Naive thymus-derived CD8-positive, alpha-beta T cell (primary cell): ENCODE measurements at regions of chr19 and their contacts with region 1.

Region 1: GRCh38 chr19:3163230-3163886 is 15.2 kb upstream of the S1PR4 start:
- DNase-seq: peak; percentile 50 to 83 (median 67)
- ATAC-seq: peak; percentile 97 to 99
- H3K4me3 Mint-ChIP-seq: peak overlapping the region in 4 of 10 donors; percentile 24 to 65 (median 55)
- H3K27ac Mint-ChIP-seq: peak overlapping the region in 8 of 10 donors; percentile 3 to 80 (median 64)
- H3K4me1 Mint-ChIP-seq: peaks cover 11 to 40% (median 17%) of the 10 kb centered on the region in 4 donors
- H3K27me3 Mint-ChIP-seq: no peaks in the 10 kb centered on the region

Region 2: DNA sequence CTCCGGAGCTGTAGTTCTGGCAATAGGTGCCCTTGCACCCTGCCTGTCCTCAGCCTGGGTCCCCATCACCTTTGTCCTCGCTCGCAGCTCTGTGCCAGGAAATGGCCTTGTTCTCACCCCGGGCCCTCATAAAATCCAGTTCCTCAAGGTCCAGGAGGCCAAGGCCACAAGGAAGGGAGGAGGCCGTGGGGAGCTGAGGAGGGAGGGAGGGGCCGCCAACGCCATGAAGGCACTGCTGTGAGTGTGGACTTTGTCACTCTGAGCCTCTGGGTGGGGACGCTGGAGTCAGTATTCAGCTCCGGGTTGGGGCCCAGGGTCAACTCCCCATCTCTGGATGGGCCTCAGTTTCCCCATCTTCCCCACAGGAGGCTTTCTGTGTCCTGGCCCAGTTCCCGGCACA is 78.4 kb before region 1 on chr19:
- POLR2A ChIA-PET with region 1: no interaction called
- DNase-seq: no peak
- ATAC-seq: no peak
- H3K4me3 Mint-ChIP-seq: no peak overlapping the region
- H3K27ac Mint-ChIP-seq: no peak overlapping the region
- H3K4me1 Mint-ChIP-seq: no peaks in the 10 kb centered on the region
- H3K27me3 Mint-ChIP-seq: no peaks in the 10 kb centered on the region

Region 3: GRCh38 chr19:3125900-3126524 is 37.3 kb before region 1 on chr19:
- POLR2A ChIA-PET with region 1: no interaction called
- DNase-seq: peak in 9 of 10 donors; percentile 44 to 65 (median 58)
- ATAC-seq: peak; percentile 79 to 86
- H3K4me3 Mint-ChIP-seq: no peak overlapping the region
- H3K27ac Mint-ChIP-seq: no peak overlapping the region
- H3K4me1 Mint-ChIP-seq: peaks cover 0 to 8% (median 3%) of the 10 kb centered on the region in 4 donors
- H3K27me3 Mint-ChIP-seq: no peaks in the 10 kb centered on the region

Region 4: GRCh38 chr19:3135961-3136683 is 27.2 kb before region 1 on chr19 and contains the start of gene GNA15:
- POLR2A ChIA-PET with region 1: no interaction called
- DNase-seq: peak in 1 of 10 donors; percentile 8
- ATAC-seq: peak in 1 of 2 donors; percentile 48
- H3K4me3 Mint-ChIP-seq: peak within 1 kb of the TSS in 5 of 10 donors; percentile 15 to 77 (median 35)
- H3K27ac Mint-ChIP-seq: peak within 1 kb of the TSS in 4 of 10 donors; percentile 11 to 76 (median 32)
- H3K4me1 Mint-ChIP-seq: peaks cover 2 to 41% (median 20%) of the 10 kb centered on the region in 4 donors
- H3K27me3 Mint-ChIP-seq: peaks cover 4 to 21% (median 8%) of the 10 kb centered on the region in 5 donors
- polyA plus RNA-seq, gene GNA15: 0.19 TPM in 1 of 3 donors, not detected in the others

Region 5: GRCh38 chr19:3185482-3186376 is 22.4 kb after region 1 on chr19 and contains the start of gene NCLN:
- POLR2A ChIA-PET with region 1: interaction called, 10 read pairs
- DNase-seq: peak; percentile 86 to 99 (median 92)
- ATAC-seq: peak; percentile 82 to 88
- H3K4me3 Mint-ChIP-seq: peak within 1 kb of the TSS; percentile 84 to 98 (median 94)
- H3K27ac Mint-ChIP-seq: peak within 1 kb of the TSS; percentile 51 to 99 (median 93)
- H3K4me1 Mint-ChIP-seq: peaks cover 22 to 70% (median 61%) of the 10 kb centered on the region in 4 donors
- H3K27me3 Mint-ChIP-seq: no peaks in the 10 kb centered on the region
- polyA plus RNA-seq, gene NCLN: 23.9 to 44.7 (median 25.5) TPM